ENCODE measurements at regions of chr20 and their contacts with region 1.

Region 1: DNA sequence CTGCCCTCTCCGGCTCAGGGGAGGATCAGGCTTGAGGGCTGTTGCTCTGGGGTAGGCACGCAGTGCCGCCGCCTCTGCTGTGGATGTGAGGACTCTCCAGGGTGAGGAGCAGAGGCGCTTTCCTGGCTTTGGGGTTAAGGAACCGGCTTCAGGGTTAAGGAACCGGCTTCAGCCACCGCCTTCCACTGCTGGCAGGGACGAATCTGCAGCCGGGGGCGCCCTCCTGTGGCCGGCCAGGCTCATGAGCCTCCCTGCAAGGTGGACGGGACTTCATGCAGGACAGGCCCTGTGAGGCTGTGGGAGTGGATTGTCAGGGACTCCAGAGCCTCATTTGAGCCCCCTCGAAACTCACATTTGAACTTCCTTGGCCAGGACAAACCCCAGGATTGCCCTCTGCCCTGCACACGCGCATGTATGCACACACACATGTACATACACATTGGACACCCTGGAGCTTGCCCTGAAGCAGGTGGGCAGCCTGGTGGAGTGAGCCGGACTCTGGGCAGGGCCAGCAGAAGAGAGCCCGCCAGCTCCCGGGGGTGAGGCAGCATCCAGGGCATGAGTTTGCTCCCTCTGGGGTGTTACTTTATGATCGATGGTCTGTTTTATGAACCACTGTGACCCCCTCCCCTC is 146.8 kb downstream of the PHACTR3 start:
- DNase-seq: peak; percentile 68
- H3K4me3 ChIP-seq: no peak overlapping the region
- H3K27ac ChIP-seq: peak overlapping the region; percentile 87
- H3K4me1 ChIP-seq: peaks cover 49% of the 10 kb centered on the region
- H3K27me3 ChIP-seq: peaks cover 46% of the 10 kb centered on the region
- CTCF ChIP-seq: peak; percentile 80

Region 2: GRCh38 chr20:59571551-59572314 is 179.4 kb before region 1 on chr20:
- intact Hi-C with region 1: no loop called
- DNase-seq: peak; percentile 67
- H3K4me3 ChIP-seq: peak overlapping the region; percentile 63
- H3K27ac ChIP-seq: peak overlapping the region; percentile 76
- H3K4me1 ChIP-seq: peaks cover 12% of the 10 kb centered on the region
- H3K27me3 ChIP-seq: peaks cover 65% of the 10 kb centered on the region
- CTCF ChIP-seq: peak; percentile 98

Region 3: GRCh38 chr20:59598625-59599310 is 152.4 kb before region 1 on chr20:
- intact Hi-C with region 1: loop called (anchors 10 kb)
- DNase-seq: peak; percentile 35
- H3K4me3 ChIP-seq: no peak overlapping the region
- H3K27ac ChIP-seq: no peak overlapping the region
- H3K4me1 ChIP-seq: peaks cover 7% of the 10 kb centered on the region
- H3K27me3 ChIP-seq: peaks cover 54% of the 10 kb centered on the region
- CTCF ChIP-seq: peak; percentile 78

Region 4: DNA sequence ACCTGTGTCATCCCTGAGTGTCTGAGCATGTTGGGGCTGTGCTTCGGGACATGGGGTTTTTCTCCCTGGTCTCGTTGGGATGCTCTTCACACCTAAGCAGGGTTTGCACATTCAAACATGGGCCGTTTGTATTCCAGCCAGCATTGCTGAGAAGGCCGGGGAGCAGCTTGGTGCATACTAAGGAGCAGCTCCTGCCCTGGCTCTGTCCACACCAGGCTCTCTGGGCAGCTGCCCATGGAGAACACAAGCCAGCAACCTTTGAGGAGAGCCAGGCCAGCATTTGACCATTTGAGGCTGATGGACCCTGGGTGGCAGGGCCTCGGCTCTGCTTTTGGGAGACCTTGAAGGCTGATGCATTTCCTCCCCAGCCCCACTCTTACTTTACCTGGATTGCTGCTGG is 54.7 kb before region 1 on chr20:
- intact Hi-C with region 1: no loop called
- DNase-seq: no peak
- H3K4me3 ChIP-seq: no peak overlapping the region
- H3K27ac ChIP-seq: no peak overlapping the region
- H3K4me1 ChIP-seq: peaks cover 15% of the 10 kb centered on the region
- H3K27me3 ChIP-seq: no peaks in the 10 kb centered on the region
- CTCF ChIP-seq: no peak

Region 5: DNA sequence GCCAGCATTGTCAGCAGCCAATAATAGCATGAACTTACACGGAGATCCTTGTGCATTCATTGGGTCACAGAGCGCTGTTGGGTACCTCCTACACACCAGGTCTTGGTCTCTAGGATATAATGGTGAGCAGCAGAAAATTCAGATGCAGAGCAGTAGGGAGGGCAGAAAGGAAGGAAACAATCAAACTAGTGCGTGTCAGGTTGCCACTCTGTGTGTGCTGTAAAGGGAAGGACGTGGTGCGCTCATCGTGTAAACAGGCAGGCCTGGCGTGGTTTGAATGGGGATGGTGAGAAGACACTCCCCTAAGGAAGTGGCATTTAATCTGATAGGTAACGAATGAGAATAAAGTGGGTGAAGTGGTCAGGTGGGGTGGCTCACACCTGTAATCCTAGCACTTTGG is 543.5 kb after region 1 on chr20:
- intact Hi-C with region 1: no loop called
- DNase-seq: no peak
- H3K4me3 ChIP-seq: no peak overlapping the region
- H3K27ac ChIP-seq: no peak overlapping the region
- H3K4me1 ChIP-seq: no peaks in the 10 kb centered on the region
- H3K27me3 ChIP-seq: peaks cover 2% of the 10 kb centered on the region
- CTCF ChIP-seq: no peak

Region 6: DNA sequence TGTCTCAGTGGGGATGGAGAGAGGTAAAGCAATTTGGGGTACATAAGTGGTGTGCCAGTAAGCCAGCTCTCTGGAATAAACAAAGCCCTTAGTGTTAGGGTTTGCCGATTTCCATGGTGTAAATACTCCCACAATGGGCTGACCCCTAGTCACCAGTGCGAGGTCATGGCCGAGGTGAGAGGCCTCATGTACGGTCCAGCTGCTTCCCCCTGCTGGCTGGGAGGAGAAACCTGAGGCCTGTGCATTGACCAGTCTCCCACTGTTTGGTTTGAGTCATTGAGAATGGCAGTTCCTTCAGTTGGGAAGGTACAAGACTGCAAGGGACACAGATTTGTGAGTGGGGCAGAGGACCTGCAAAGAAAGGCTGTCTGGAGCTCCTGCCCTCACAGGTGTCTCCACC is 589.1 kb after region 1 on chr20:
- intact Hi-C with region 1: no loop called
- DNase-seq: no peak
- H3K4me3 ChIP-seq: no peak overlapping the region
- H3K27ac ChIP-seq: no peak overlapping the region
- H3K4me1 ChIP-seq: no peaks in the 10 kb centered on the region
- H3K27me3 ChIP-seq: peaks cover 4% of the 10 kb centered on the region
- CTCF ChIP-seq: no peak